ENCODE measurements at regions of chrX and their contacts with region 1.

Region 1: GRCh38 chrX:153400146-153401127 is 713 bp downstream of the PNMA6E start:
- DNase-seq: peak in 8 of 9 experiments; percentile 11 to 66 (median 48)
- ATAC-seq: peak; percentile 48
- H3K4me3 ChIP-seq: no peak overlapping the region
- H3K4me3 Mint-ChIP-seq: no peak overlapping the region
- H3K27ac ChIP-seq: no peak overlapping the region
- H3K27ac Mint-ChIP-seq: no peak overlapping the region
- H3K4me1 ChIP-seq: no peaks in the 10 kb centered on the region
- H3K4me1 Mint-ChIP-seq: no peaks in the 10 kb centered on the region
- H3K27me3 ChIP-seq: no peaks in the 10 kb centered on the region
- H3K27me3 Mint-ChIP-seq: no peaks in the 10 kb centered on the region
- CTCF ChIP-seq: peak; percentile 51

Region 2: DNA sequence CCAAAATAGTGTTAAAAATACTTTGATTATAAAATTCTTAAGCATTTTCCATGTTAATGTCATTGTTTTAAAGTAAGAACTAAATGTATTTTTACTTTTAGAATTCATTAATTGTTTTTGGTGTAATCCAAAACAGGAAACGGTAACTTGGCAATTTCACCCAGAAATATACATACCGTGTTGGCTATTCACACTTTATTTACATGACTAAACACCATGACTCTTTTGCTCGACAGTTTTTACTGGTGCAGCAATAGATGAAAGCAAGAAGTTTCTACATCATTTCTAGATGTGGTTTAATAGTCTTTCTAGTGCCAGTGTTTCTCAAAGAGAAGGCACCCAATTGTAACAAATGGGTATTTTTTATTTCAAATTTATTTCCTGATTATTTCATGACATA is 246.9 kb before region 1 on chrX:
- CTCF ChIA-PET with region 1: no interaction called
- POLR2A ChIA-PET with region 1: no interaction called
- intact Hi-C with region 1: no loop called
- DNase-seq: no peak
- ATAC-seq: no peak
- H3K4me3 ChIP-seq: no peak overlapping the region
- H3K4me3 Mint-ChIP-seq: no peak overlapping the region
- H3K27ac ChIP-seq: no peak overlapping the region
- H3K27ac Mint-ChIP-seq: no peak overlapping the region
- H3K4me1 ChIP-seq: no peaks in the 10 kb centered on the region
- H3K4me1 Mint-ChIP-seq: no peaks in the 10 kb centered on the region
- H3K27me3 ChIP-seq: no peaks in the 10 kb centered on the region
- H3K27me3 Mint-ChIP-seq: peaks cover 12% of the 10 kb centered on the region
- CTCF ChIP-seq: no peak

Region 3: GRCh38 chrX:153460845-153461244 is 60.4 kb after region 1 on chrX:
- CTCF ChIA-PET with region 1: no interaction called
- POLR2A ChIA-PET with region 1: no interaction called
- intact Hi-C with region 1: loop called in 1 of 2 experiments (anchors 10 kb)
- DNase-seq: peak in 8 of 9 experiments; percentile 25 to 66 (median 52)
- ATAC-seq: peak; percentile 74
- H3K4me3 ChIP-seq: no peak overlapping the region
- H3K4me3 Mint-ChIP-seq: no peak overlapping the region
- H3K27ac ChIP-seq: no peak overlapping the region
- H3K27ac Mint-ChIP-seq: no peak overlapping the region
- H3K4me1 ChIP-seq: no peaks in the 10 kb centered on the region
- H3K4me1 Mint-ChIP-seq: peaks cover 1% of the 10 kb centered on the region
- H3K27me3 ChIP-seq: no peaks in the 10 kb centered on the region
- H3K27me3 Mint-ChIP-seq: no peaks in the 10 kb centered on the region
- CTCF ChIP-seq: peak; percentile 25

Measured in CD8-positive, alpha-beta T cell (primary cell).